ENCODE measurements at regions of chr6 and their contacts with region 1.

Region 1: DNA sequence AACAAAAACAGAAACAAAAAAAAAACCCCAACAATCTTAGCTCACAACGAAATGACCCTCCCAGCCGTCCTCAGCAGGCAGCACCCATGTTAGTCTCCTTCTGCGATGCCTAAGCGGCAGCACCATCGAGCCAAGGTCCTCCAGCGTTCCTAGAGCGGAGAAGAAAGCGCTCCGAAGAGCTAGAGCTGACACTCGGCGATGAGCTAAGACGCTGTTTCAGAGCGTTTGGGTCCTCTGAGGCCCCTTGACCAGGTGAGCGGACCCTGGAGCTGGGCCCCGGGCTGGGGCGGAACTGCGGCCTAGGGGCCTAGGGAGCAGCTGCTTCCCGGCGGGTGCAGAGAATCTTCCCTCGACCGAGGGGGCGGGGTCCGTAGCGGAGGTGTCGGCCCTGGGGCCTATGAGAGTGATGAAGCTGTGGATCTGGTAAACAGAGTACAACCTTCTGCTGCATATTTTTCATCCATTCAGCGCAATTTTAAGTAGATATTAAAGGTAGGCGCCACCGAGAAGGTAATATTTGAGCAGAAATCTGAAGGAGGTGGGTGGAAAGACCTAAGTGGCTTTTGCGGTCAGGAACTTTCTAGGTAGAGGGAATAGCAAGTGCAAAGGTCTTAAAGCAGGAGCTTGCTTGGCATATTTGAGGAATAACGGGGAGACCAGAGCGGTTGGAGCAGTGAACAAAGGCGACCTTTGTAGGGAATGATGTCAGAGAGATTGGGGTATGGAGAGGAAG is at the start of gene ZSCAN26:
- H3K4me3 ChIP-seq: peak within 1 kb of the TSS; percentile 89
- H3K27ac ChIP-seq: peak within 1 kb of the TSS; percentile 77
- H3K4me1 ChIP-seq: peaks cover 20% of the 10 kb centered on the region; the same call in 1 of the 2 replicates
- CTCF ChIP-seq: no peak

Region 2: DNA sequence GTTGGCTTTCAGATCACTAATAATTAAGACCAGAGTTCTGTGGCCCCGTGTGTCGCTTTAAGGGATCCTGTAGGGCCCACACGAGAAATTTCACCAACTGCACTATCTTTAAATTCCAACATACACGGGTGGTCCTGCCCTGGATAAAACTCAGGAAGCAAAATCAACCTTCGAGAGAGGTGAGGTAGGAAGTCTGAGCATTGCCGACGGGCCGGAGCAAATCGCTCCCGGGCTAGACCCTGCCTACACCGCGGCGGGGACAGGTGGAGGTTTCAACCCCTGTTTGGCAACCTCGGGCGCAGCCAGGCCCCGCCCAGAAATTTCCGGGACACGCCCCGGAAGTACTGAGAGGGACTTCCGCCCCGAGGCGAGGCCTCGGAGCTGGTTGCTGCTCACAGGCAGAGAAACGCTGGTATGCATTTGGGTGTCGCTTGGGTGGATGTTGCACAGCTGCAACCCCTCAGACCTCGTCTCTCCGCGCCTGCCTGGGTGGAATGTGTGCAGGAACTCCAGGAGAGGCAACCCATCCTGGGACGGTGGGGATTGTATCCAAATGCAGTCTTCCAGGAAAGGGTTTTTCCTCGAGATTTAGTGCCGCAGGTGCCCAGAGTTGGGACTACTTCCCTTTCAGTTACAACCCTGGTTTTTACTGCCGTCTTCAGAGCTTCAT is 105.6 kb before region 1 on chr6:
- CTCF ChIA-PET with region 1: no interaction called
- POLR2A ChIA-PET with region 1: interaction called, 13 read pairs
- H3K4me3 ChIP-seq: peak overlapping the region; percentile 50
- H3K27ac ChIP-seq: peak overlapping the region; percentile 63
- H3K4me1 ChIP-seq: peaks cover 3% of the 10 kb centered on the region; the same call in 1 of the 2 replicates
- CTCF ChIP-seq: no peak; the same call in 1 of the 2 replicates

Region 3: GRCh38 chr6:28218271-28219248 is 48.6 kb before region 1 on chr6:
- CTCF ChIA-PET with region 1: interaction called, 7 read pairs
- POLR2A ChIA-PET with region 1: interaction called, 11 read pairs
- H3K4me3 ChIP-seq: peak overlapping the region; percentile 67
- H3K27ac ChIP-seq: peak overlapping the region; percentile 63; the same call in 1 of the 2 replicates
- H3K4me1 ChIP-seq: no peaks in the 10 kb centered on the region; the same call in 1 of the 2 replicates
- CTCF ChIP-seq: no peak

Region 4: DNA sequence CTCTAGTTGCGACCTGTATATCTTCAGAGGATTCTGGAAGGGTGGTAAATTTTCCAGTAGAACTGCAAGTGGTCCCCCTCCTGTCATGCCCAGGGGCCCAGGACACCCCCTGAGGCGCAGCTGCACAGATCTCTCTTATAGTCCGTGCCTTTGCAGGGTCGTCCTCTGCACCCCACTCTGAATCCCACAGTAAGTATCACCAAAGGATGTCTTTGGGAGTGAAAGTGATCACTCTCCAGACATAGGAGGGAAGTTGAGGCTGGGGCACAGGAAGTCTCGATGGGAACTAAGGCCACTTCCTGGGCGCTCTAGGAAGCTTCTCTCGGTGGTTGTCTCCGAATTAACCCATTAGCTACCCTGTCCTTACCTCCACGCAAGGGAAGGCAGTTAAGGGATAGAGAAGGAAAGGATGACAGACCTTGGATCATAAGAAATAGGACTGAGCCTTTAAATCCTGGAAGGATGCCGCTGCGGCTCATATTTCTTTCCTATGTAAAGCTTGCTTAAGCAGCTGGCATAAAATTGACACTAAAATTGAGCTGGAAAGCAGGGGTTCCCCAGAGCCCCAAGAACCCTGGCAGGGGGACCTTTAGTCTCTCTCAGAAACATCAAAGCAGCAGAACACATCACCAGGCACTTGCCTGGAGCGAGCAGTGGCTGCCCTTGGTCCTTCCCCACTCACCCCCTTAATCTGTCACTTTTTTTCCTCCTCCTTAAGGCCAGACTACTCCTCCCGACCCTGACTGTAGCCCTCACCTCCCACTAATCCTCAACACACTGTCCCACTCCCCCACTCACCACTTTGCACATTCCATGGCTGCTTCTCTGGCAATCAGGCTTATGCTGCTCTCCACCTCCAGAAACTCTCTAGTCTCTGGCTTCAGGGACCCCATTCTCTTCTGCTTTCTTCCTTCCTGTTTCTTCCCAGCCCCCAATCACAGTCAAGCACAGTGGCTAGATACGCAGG is 14.8 kb before region 1 on chr6 and contains the start of gene ZKSCAN4:
- CTCF ChIA-PET with region 1: no interaction called
- POLR2A ChIA-PET with region 1: interaction called, 62 read pairs
- H3K4me3 ChIP-seq: peak within 1 kb of the TSS; percentile 74
- H3K27ac ChIP-seq: peak within 1 kb of the TSS; percentile 20; the same call in 1 of the 2 replicates
- H3K4me1 ChIP-seq: peaks cover 5% of the 10 kb centered on the region; the same call in 1 of the 2 replicates
- CTCF ChIP-seq: no peak

Region 5: DNA sequence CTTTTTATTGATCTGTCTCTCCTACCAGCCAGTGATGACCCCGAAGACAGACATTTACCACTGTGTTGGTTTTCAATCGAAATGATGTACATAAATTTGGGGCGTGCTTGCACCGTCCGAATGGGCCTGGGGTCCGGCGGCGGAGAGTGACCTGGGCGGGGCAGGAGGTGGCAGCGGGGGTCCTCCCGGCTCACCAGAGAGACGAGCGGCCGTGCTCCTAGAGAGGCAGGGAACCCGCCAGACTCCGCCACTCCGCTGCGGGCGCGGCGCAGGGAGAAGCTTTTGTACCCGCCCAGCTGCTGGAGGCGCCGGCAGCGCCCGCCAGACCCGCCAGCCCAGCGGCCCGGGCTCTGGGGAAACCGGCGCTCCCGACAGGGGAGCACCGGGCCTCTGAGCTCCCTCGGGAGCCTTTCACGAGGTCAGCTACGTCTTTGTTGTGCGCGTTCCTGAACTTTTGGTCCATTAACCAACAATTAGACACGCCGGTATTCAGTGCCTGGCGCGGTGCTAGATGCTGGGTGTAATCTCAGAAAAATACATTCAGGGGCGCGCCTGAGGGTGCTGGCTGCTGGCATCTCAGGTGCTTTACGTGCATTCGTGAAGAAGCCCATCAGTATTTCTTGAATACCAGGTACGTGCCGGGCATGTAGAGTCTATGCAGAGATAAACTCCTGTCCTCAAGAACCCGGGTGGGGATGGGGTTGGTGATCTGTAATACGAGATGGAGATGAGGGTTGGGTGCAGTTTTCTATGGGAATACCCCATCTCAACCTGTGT is 14.3 kb after region 1 on chr6 and contains the start of gene PGBD1:
- CTCF ChIA-PET with region 1: interaction called, 6 read pairs
- POLR2A ChIA-PET with region 1: interaction called, 34 read pairs
- H3K4me3 ChIP-seq: peak within 1 kb of the TSS; percentile 89
- H3K27ac ChIP-seq: peak within 1 kb of the TSS; percentile 65; the same call in 1 of the 2 replicates
- H3K4me1 ChIP-seq: no peaks in the 10 kb centered on the region
- CTCF ChIP-seq: 0 out of 2 replicates have a peak, but pooled peaks have one; percentile 25

Region 6: DNA sequence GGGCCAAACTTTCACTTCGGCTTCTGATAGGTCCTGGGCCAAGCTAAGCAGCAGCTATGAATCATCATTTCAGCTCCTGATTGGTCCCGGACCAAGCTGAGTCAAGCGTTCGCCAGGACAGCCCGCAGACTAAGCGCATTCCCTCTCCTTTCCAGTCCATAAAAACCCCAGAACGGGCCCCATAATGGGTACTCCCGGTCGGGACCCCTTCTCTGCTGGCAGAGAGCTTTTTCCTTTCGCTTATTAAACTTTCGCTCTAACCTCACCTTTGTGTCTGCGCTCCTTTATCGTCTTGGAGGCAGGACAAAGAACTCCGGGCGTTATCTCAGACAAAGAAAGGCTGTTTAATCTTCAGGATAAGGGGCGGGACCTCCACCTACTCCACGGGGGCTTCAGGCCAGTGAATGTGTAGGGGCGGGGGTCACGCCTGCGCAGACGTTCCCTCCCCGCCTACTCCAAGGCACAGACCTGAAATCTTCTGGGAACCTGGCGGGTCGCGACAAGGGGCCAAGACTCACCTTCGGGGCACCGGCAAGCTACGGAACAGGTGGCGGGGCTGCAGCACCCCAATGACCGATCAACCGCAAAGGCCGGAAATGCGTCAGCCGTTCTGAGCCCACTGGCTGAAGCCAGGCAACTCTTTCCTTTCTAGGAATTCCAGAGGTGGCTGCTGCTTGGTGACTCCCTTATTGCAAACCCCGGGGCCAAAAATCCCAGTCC is 68.6 kb after region 1 on chr6 and contains the start of gene ZSCAN31:
- CTCF ChIA-PET with region 1: interaction called, 3 read pairs
- POLR2A ChIA-PET with region 1: interaction called, 37 read pairs
- H3K4me3 ChIP-seq: peak within 1 kb of the TSS; percentile 78
- H3K27ac ChIP-seq: peak within 1 kb of the TSS; percentile 88
- H3K4me1 ChIP-seq: peaks cover 4% of the 10 kb centered on the region; the same call in 1 of the 2 replicates
- CTCF ChIP-seq: no peak

Region 7: GRCh38 chr6:28355743-28356665 is 88.9 kb after region 1 on chr6:
- CTCF ChIA-PET with region 1: interaction called, 19 read pairs
- POLR2A ChIA-PET with region 1: interaction called, 15 read pairs
- H3K4me3 ChIP-seq: peak overlapping the region; percentile 63
- H3K27ac ChIP-seq: peak overlapping the region; percentile 4; the same call in 1 of the 2 replicates
- H3K4me1 ChIP-seq: peaks cover 3% of the 10 kb centered on the region; the same call in 1 of the 2 replicates
- CTCF ChIP-seq: peak; percentile 50; the same call in 1 of the 2 replicates

Region 8: DNA sequence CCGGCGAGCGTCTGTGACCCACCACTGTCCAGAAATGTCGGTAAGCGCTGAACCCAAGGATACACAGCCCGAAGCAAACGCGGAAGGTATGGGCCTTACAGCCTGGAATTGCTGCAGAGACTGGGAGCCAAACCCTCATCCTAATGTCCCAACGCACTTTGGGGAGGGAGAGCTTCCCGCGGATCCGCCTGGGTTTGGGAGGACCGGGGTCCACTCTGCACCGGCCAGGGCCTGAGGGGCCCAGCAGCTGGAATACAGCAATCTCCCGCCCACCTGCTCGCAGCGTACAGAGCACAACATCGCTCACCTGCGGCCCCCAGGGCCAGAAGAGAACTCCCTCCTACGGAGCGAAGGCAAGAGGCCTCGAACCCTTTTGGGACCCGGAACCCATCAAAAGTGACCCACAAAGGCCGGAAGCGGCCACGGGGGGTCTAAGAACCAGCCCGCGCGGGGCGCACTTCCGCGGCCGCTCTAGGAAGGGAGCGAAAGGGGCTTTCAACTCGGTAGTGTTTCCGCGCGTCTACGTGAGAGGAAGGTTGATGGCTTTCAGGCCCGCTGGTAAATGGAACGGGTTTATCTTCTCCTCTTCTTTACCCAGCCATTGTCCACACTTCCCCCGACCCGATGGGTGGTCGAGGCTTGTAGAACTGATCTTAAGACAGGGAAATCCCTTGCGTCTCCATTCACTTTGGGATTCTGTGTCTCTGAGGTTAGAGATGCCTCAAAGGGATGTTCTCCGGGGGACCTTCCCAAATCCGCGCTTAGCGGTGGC is 132.4 kb after region 1 on chr6 and contains the start of gene ZSCAN12:
- CTCF ChIA-PET with region 1: no interaction called
- POLR2A ChIA-PET with region 1: no interaction called
- H3K4me3 ChIP-seq: peak within 1 kb of the TSS; percentile 72
- H3K27ac ChIP-seq: peak within 1 kb of the TSS; percentile 75
- H3K4me1 ChIP-seq: 0 out of 2 replicates have a peak, but pooled peaks cover 4% of the 10 kb centered on the region
- CTCF ChIP-seq: peak; percentile 94; the same call in 1 of the 2 replicates